Activated B cell treated with CpG ODN at 0.5 μM for 24 hours (primary cell): ENCODE measurements at regions of chr3 and their contacts with region 1.

Region 1: GRCh38 chr3:183468424-183468823 is 40.0 kb upstream of the MCF2L2 start:
- DNase-seq: no peak
- ATAC-seq: no peak
- H3K4me3 Mint-ChIP-seq: no peak overlapping the region
- H3K27ac Mint-ChIP-seq: no peak overlapping the region
- H3K4me1 Mint-ChIP-seq: peaks cover 10% of the 10 kb centered on the region
- H3K27me3 Mint-ChIP-seq: peaks cover 2% of the 10 kb centered on the region
- CTCF ChIP-seq: no peak

Region 2: GRCh38 chr3:182105875-182106274 is 1362.5 kb before region 1 on chr3:
- CTCF ChIA-PET with region 1: no interaction called
- POLR2A ChIA-PET with region 1: no interaction called
- intact Hi-C with region 1: no loop called
- DNase-seq: no peak
- ATAC-seq: no peak
- H3K4me3 Mint-ChIP-seq: no peak overlapping the region
- H3K27ac Mint-ChIP-seq: no peak overlapping the region
- H3K4me1 Mint-ChIP-seq: no peaks in the 10 kb centered on the region
- H3K27me3 Mint-ChIP-seq: no peaks in the 10 kb centered on the region
- CTCF ChIP-seq: no peak

Region 3: GRCh38 chr3:183357564-183358079 is 110.8 kb before region 1 on chr3:
- CTCF ChIA-PET with region 1: no interaction called
- POLR2A ChIA-PET with region 1: no interaction called
- intact Hi-C with region 1: no loop called
- DNase-seq: no peak
- ATAC-seq: no peak
- H3K4me3 Mint-ChIP-seq: no peak overlapping the region
- H3K27ac Mint-ChIP-seq: no peak overlapping the region
- H3K4me1 Mint-ChIP-seq: no peaks in the 10 kb centered on the region
- H3K27me3 Mint-ChIP-seq: peaks cover 2% of the 10 kb centered on the region
- CTCF ChIP-seq: no peak

Region 4: DNA sequence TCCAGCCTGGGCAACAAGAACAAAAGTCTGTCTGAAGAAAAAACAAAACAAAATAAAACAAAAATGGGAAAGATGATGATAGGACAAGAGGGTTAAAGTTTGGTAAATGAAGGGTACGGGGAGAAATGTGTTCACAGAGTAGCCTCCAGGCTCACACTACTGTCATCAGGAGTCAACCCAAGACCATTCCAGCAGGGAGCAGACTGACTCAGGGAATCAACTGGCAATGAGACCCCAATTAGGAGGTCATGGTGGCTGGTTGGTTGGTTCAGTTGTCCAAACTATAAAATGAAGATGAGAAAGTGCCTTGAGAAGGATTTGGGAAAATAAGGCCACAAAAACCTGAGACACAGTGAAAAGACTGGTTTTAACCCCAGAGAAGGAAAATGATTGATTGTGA is 35.3 kb after region 1 on chr3:
- CTCF ChIA-PET with region 1: no interaction called
- POLR2A ChIA-PET with region 1: no interaction called
- intact Hi-C with region 1: no loop called
- DNase-seq: no peak
- ATAC-seq: no peak
- H3K4me3 Mint-ChIP-seq: no peak overlapping the region
- H3K27ac Mint-ChIP-seq: no peak overlapping the region
- H3K4me1 Mint-ChIP-seq: peaks cover 5% of the 10 kb centered on the region
- H3K27me3 Mint-ChIP-seq: no peaks in the 10 kb centered on the region
- CTCF ChIP-seq: no peak

Region 5: GRCh38 chr3:183766745-183767606 is 298.6 kb after region 1 on chr3:
- CTCF ChIA-PET with region 1: interaction called, 50 read pairs
- POLR2A ChIA-PET with region 1: interaction called, 4 read pairs
- intact Hi-C with region 1: loop called (anchors 1 kb)
- DNase-seq: peak; percentile 32
- ATAC-seq: peak; percentile 86
- H3K4me3 Mint-ChIP-seq: no peak overlapping the region
- H3K27ac Mint-ChIP-seq: no peak overlapping the region
- H3K4me1 Mint-ChIP-seq: peaks cover 9% of the 10 kb centered on the region
- H3K27me3 Mint-ChIP-seq: no peaks in the 10 kb centered on the region
- CTCF ChIP-seq: no peak

Region 6: DNA sequence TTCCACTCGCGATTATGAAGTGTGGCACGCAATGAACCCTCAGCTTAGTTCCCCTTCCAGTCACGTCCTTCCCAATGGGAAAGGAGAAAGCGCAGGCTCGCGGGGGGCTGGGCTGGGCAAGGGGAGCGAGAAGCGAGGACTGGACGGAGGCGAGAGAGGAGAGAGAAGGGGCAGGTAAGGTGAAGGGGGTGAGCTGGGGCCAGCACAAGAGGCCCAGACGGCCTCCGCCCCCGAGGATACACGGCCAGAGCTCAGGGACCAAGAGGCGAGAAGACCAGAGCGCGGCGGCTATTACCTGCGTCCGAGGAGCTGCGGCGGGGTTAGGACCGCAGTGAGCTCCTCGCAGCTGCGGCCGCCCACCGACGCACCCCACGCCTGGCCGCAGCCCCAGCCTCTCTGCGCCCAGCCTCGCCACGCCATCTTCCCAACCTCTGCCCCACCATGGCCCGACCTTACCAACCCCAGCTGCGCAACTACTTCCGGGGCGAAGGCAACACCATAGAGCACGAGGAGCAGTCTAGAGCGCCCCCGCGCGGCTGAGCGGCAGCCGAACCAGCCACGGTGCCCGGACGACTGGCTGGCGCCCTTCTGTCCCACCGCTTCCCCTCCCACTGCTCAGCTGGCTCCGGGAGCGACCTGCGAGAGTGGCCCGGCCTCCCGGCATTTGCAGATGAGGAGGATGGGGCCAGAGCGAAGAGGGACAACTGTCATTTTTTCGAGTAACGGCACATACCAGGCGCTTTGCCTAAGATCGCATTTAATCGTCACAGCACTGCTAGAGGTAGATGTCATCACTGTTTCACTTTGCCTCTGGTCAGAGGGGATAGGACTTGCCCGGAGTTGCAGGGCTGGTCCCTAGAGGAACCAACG is 416.2 kb after region 1 on chr3 and contains the start of gene PARL:
- CTCF ChIA-PET with region 1: no interaction called
- POLR2A ChIA-PET with region 1: no interaction called
- intact Hi-C with region 1: loop called (anchors 1 kb)
- DNase-seq: peak; percentile 94
- ATAC-seq: peak; percentile 99
- H3K4me3 Mint-ChIP-seq: peak within 1 kb of the TSS; percentile 98
- H3K27ac Mint-ChIP-seq: peak within 1 kb of the TSS; percentile 85
- H3K4me1 Mint-ChIP-seq: peaks cover 36% of the 10 kb centered on the region
- H3K27me3 Mint-ChIP-seq: peaks cover 2% of the 10 kb centered on the region
- CTCF ChIP-seq: no peak
- total RNA-seq, gene PARL: 57.6 and 57.8 TPM in 2 replicates